ENCODE measurements at regions of chr16 and their contacts with region 1.

Region 1: DNA sequence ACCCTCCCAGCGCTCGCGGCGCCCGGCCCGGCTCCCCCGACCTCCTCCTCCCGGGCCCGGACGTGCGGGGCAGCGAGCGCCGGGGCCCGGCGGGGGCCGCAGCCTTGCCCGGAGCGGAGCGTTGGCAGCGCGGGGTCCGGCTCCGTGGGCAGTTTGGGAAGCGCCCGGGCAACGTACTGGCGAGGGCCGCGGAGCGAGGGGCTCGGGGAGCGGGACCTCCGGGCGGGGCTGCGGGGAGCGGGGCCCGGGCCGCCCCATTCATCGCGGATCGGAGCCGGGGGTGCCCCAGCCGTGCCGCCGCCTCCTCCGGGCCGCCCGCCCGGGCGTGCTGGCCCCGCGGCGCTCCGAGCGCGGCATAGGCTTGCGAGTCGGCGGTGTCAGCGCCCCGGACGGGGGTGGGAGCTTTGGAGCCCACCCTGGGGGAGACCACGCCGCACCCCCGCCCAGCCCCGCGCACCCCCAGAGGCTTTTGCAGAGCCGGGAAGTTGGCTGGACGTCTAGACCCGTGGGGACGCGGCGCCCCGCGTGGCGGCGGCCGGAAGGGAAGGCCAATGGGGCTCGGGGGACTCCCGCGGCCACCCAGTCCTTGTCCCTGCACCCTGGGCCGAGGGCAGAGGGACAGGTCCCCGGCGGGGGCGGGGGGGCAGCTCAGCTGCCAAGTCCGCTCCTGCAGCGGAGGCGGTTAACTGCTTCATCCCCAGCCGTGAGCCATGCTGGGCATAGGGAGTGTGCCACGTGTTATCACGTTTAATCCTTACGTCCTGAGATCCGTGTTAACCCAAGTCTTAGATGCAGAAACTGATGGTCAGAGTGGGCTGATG is 852 bp downstream of the ZNF469 start:
- DNase-seq: no peak
- H3K4me3 ChIP-seq: peak overlapping the region; percentile 21 to 38
- H3K27ac ChIP-seq: no peak overlapping the region
- H3K4me1 ChIP-seq: peaks cover 4% of the 10 kb centered on the region
- H3K27me3 ChIP-seq: no peaks in the 10 kb centered on the region
- CTCF ChIP-seq: peak in 3 of 4 experiments; percentile 8 to 54 (median 51)
- POLR2A ChIP-seq: no peak

Region 2: DNA sequence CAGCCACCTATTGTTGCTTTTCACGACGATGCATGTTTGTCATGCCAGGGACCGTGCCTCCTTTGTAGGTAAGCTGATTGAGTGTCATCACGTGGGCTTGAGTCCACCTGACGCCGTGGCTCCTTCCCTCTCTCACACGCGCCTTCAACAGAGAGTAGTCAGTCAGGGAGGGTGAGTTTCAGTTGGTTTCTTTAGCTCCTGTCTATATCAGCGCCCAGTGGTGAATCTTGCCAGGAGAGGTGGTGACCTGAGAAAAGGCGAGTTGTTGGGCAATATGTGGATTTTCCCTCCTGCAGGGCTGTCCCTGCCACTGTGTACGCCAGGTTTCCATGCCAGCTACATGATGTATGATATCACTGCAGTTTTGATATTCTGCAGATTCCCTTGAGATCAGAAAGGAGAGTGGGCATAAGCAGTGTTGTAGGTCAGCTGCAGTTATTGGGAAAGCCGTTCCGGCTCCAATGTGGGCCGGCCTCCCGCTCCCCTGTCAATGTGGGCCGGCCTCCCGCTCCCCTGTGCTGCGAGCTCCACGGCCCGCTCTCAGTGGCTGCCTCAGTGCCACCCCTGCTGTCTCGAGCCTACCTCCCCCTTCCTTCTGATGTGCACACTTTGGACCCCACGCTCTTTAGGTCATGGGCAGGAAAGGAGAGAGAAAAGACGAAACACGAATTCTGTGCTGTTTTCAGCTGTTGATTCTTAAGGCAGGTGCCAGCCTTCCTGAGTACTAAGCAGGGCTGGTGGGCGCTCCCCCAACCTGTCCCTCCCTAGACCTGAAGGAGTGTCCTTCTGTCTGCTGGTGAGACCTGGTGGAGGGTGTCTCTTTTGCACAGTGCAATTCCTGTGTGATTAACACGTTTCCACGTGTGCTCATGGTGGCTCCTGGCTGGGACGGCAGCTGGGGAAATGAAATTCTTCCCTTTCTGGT is 400.9 kb before region 1 on chr16:
- intact Hi-C with region 1: loop called (anchors 5 kb)
- DNase-seq: no peak
- H3K4me3 ChIP-seq: no peak overlapping the region
- H3K27ac ChIP-seq: no peak overlapping the region
- H3K4me1 ChIP-seq: no peaks in the 10 kb centered on the region
- H3K27me3 ChIP-seq: no peaks in the 10 kb centered on the region
- CTCF ChIP-seq: no peak
- POLR2A ChIP-seq: no peak

Region 3: GRCh38 chr16:88194397-88195268 is 189.0 kb before region 1 on chr16:
- intact Hi-C with region 1: loop called (anchors 5 kb)
- DNase-seq: no peak
- H3K4me3 ChIP-seq: no peak overlapping the region
- H3K27ac ChIP-seq: no peak overlapping the region
- H3K4me1 ChIP-seq: no peaks in the 10 kb centered on the region
- H3K27me3 ChIP-seq: no peaks in the 10 kb centered on the region
- CTCF ChIP-seq: peak in 1 of 4 experiments; percentile 2
- POLR2A ChIP-seq: no peak